ENCODE measurements at regions of chr10 and their contacts with region 1.

Region 1: GRCh38 chr10:17175551-17175950 is 25.9 kb downstream of the TRDMT1 start:
- DNase-seq: peak; percentile 24
- ATAC-seq: peak; percentile 45; the same call in 1 of the 2 replicates
- H3K4me3 ChIP-seq: no peak overlapping the region
- H3K27ac ChIP-seq: no peak overlapping the region
- H3K4me1 ChIP-seq: peaks cover 10% of the 10 kb centered on the region
- H3K27me3 ChIP-seq: no peaks in the 10 kb centered on the region
- CTCF ChIP-seq: no peak
- POLR2A ChIP-seq: no peak
- RAD21 ChIP-seq: no peak

Region 2: GRCh38 chr10:16933783-16934182 is 241.8 kb before region 1 on chr10:
- CTCF ChIA-PET with region 1: no interaction called
- POLR2A ChIA-PET with region 1: no interaction called
- dilution Hi-C with region 1: no loop called
- in situ Hi-C with region 1: no loop called
- intact Hi-C with region 1: no loop called
- DNase-seq: no peak
- ATAC-seq: no peak; the same call in 1 of the 2 replicates
- H3K4me3 ChIP-seq: no peak overlapping the region
- H3K27ac ChIP-seq: no peak overlapping the region
- H3K4me1 ChIP-seq: peaks cover 2% of the 10 kb centered on the region; the same call in 1 of the 2 replicates
- H3K27me3 ChIP-seq: no peaks in the 10 kb centered on the region
- CTCF ChIP-seq: no peak
- POLR2A ChIP-seq: no peak
- RAD21 ChIP-seq: no peak

Region 3: GRCh38 chr10:17128261-17128660 is 47.3 kb before region 1 on chr10:
- CTCF ChIA-PET with region 1: no interaction called
- POLR2A ChIA-PET with region 1: no interaction called
- dilution Hi-C with region 1: no loop called
- in situ Hi-C with region 1: no loop called
- intact Hi-C with region 1: loop called (anchors 1 kb)
- DNase-seq: no peak
- ATAC-seq: no peak
- H3K4me3 ChIP-seq: no peak overlapping the region
- H3K27ac ChIP-seq: no peak overlapping the region
- H3K4me1 ChIP-seq: peaks cover 2% of the 10 kb centered on the region; the same call in 1 of the 2 replicates
- H3K27me3 ChIP-seq: no peaks in the 10 kb centered on the region
- CTCF ChIP-seq: no peak
- POLR2A ChIP-seq: no peak
- RAD21 ChIP-seq: no peak

Region 4: DNA sequence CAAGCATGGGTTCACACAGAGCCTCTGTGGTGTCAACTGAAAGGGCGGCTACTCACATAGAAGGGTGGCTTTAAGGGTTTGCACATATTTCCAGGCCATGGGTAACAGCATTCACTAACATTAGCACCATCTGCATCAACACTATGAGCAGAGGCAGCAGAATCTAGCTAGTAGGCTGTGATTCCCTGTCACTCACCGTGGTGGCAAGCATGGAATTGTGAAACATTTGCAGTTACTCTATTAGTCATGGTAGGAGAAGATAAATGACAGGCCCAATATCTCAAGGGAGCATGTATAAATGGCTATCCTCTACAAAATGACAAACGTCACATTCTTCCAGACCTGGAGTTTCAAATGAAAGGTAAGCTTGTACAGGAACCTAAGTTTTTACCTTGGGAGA is 13.8 kb before region 1 on chr10:
- CTCF ChIA-PET with region 1: no interaction called
- POLR2A ChIA-PET with region 1: no interaction called
- dilution Hi-C with region 1: no loop called
- in situ Hi-C with region 1: no loop called
- intact Hi-C with region 1: loop called (anchors 2 kb)
- DNase-seq: no peak
- ATAC-seq: no peak
- H3K4me3 ChIP-seq: no peak overlapping the region
- H3K27ac ChIP-seq: no peak overlapping the region
- H3K4me1 ChIP-seq: no peaks in the 10 kb centered on the region
- H3K27me3 ChIP-seq: no peaks in the 10 kb centered on the region
- CTCF ChIP-seq: no peak
- POLR2A ChIP-seq: no peak
- RAD21 ChIP-seq: no peak

Measured in IMR-90 (cell line).